ENCODE measurements at regions of chr11 and their contacts with region 1.

Region 1: DNA sequence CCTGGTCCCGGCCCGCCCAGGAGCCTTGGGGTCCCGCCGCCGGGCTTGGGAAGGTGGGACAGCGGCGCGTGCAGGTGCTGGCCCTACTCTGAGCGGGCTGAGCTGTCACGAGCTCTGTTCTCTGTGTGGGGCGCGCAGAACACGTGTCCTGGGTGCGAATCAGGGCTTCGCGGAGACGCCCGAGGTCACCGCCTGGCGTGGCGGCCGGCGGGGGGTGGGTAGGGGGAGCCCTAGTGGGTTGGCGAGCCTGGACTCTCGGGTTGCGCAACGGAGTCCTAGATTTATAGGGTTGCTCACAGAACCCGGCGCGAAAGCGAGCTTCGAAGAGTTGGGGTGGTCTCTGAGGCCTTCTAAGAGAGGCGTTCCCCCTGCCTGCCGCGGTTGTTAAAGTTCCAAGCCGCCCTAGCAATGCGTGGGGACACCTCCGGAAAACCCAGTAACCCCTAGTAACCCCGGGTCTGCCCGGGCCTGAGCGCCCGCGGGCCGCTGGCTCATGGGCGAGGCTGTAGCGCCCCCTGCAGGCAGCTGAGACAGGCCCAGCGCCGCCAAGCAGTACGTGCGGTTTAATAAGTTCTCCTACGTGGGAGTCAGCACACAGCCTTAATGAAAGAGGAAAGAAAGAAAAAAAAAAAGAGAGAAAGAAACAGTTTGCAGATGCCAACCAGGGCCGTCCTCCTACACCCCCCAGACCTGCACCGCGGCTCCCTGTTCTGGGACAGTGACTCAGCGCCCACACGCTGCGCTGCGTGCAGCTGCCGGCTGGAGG is 2.8 kb downstream of the ADM start:
- DNase-seq: peak; percentile 50 to 95 (median 76)

Region 2: DNA sequence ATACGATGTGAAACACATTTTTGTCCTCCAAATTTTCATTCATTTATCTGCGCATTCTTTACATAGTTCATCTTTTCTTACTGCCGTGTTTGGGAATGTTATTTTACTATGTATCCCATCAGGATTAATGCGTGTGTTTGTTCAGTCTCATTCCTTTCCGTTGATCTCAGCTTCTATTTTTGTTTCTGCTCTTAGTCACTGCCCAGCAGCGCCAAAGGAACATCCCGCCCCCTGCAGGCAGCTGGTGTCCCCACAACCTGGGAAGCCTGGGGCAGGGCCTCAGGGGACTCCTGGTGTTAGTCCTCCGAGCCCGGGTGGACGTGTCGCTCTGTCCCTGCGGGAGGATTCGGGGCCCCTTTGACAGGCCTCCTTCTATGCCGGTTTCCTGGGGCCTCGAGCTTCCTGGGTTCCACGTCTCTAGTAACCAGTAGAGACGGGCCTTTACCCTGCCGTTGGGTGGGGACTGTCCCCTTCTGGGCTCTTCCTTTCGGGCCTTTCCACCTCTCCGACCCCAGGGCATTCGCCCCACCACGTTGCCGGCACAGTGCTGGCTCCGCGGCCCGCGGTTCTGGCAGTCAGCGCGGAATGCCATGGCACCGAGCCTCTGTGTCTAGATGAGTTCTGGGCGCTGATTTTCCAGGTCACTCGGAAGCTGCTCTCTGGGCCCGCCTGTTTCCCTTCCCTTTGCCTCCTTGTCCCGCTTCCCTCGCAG is 694.4 kb before region 1 on chr11:
- intact Hi-C with region 1: loop called (anchors 5 kb)
- DNase-seq: peak; percentile 83 to 98 (median 94)

Region 3: GRCh38 chr11:9757809-9758636 is 549.6 kb before region 1 on chr11:
- intact Hi-C with region 1: loop called (anchors 1 kb)
- DNase-seq: peak; percentile 61 to 97 (median 82)

Region 4: DNA sequence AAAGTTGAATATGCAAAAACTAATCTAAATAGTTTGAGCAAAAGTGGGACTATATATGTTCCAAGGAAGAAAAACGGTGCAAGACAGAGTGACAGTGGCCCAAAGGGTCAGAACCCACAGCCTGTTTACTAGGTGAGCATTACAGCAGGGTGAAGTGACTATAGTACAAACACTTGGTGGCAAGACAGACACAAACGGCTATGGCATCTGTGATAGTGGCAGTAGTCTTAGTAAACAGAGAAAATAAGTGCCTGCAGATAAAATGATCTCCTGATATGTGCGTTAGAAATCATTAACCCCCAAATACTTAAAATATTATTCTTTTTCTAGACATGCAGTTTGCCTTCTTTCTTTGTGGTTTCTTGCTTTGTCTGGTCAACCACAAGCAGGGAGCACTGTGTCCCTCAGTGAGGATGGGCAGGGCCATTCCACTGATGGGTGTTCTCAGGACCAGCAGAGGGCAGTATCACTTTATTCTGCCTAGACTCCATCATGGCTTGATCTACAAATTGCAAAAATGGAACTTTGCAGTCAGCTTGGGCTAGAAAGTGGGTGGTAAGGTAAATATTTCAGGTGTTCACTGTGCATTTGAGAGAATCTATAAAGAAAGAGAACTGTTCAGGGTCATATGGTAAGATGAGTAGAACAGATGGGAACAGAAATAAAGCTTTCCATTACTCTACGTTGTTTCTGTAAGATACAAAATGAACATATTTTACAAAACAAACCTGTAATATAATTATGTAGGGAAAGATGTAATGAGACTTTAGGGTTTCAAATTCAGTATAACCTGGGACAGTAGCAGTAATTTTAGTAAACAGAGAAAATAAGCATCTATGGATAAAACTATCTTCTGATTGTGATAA is 445.5 kb before region 1 on chr11:
- intact Hi-C with region 1: loop called (anchors 5 kb)
- DNase-seq: peak in 7 of 10 donors; percentile 12 to 81 (median 30)

Region 5: DNA sequence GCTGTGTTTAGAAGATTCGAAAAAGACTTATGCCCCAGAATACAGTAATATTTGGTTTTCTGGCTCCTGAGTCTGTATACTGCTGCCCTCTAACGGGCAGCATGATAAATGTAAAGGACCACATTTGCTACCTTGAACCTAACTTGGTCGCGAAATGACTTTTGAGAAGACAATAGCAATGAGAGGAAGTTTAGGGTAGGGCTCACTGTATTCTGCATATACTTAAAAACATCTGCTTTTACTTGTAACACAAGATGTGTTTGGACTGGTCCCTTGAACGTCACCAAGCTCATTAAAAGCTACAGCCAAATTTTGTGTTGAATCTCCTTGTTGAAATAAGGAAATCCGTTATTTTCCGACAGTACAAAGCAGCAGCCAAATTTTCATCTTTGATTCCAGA is 334.6 kb before region 1 on chr11:
- intact Hi-C with region 1: loop called (anchors 5 kb)
- DNase-seq: no peak

Region 6: DNA sequence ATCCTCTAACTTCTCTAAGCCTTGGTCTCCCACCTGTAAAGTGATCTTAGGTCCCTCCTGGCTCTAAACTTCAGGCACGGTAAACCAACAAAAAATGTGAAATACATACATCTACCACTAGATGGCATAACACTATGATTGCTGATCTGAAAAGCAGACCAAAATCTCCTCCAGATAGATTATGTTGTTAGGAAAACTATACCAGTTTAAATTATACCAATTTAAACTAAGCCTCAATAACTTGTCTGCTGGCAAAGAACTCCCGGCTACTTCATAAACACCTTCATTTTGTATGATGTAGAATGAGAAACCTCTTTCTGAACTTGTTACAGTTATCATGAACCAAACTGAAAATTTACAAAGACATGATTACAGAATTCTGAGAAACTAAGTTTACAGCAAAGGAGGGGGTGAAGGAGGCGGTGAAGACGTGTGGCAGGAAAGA is 99.5 kb before region 1 on chr11:
- intact Hi-C with region 1: loop called (anchors 1 kb)
- DNase-seq: no peak

Region 7: GRCh38 chr11:10893714-10894151 is 586.1 kb after region 1 on chr11:
- intact Hi-C with region 1: no loop called
- DNase-seq: no peak

Measured in posterior cingulate gyrus (tissue), 11 donors.